ENCODE measurements at regions of chr20 and their contacts with region 1.

Region 1: GRCh38 chr20:41095110-41095969 is 42.0 kb upstream of the PLCG1 start:
- DNase-seq: peak; percentile 74
- ATAC-seq: peak; percentile 76
- H3K4me3 Mint-ChIP-seq: no peak overlapping the region
- H3K27ac Mint-ChIP-seq: no peak overlapping the region
- H3K4me1 Mint-ChIP-seq: peaks cover 12% of the 10 kb centered on the region
- H3K27me3 Mint-ChIP-seq: no peaks in the 10 kb centered on the region

Region 2: GRCh38 chr20:40962730-40963504 is 132.4 kb before region 1 on chr20:
- CTCF ChIA-PET with region 1: interaction called, 79 read pairs
- POLR2A ChIA-PET with region 1: no interaction called
- DNase-seq: peak; percentile 86
- ATAC-seq: peak; percentile 91
- H3K4me3 Mint-ChIP-seq: no peak overlapping the region
- H3K27ac Mint-ChIP-seq: no peak overlapping the region
- H3K4me1 Mint-ChIP-seq: peaks cover 21% of the 10 kb centered on the region
- H3K27me3 Mint-ChIP-seq: peaks cover 9% of the 10 kb centered on the region

Region 3: DNA sequence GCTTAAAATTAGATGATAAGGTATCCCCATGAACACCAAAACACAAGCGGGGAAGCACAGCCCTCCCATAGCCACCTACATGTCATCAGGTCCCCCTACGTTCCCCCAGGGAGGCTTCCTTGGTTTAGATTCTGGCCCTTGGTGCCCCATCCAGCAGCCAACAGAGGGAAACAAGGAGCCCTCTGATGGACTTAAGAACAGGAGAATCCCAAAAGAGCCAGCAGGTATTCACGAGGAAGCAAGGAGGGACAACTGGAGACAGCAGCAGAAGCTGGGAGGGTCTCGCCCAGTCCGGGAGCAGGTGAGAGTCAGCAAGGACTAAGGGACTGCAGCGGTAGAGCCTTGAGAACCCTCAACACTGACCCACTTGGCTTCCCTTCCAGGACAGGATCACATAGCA is 125.1 kb before region 1 on chr20:
- CTCF ChIA-PET with region 1: interaction called, 79 read pairs
- POLR2A ChIA-PET with region 1: no interaction called
- DNase-seq: no peak
- ATAC-seq: no peak
- H3K4me3 Mint-ChIP-seq: no peak overlapping the region
- H3K27ac Mint-ChIP-seq: no peak overlapping the region
- H3K4me1 Mint-ChIP-seq: peaks cover 22% of the 10 kb centered on the region
- H3K27me3 Mint-ChIP-seq: peaks cover 39% of the 10 kb centered on the region

Region 4: GRCh38 chr20:41047975-41048305 is 47.4 kb before region 1 on chr20:
- CTCF ChIA-PET with region 1: interaction called, 11 read pairs
- POLR2A ChIA-PET with region 1: no interaction called
- DNase-seq: no peak
- ATAC-seq: peak; percentile 55
- H3K4me3 Mint-ChIP-seq: peak overlapping the region; percentile 77
- H3K27ac Mint-ChIP-seq: peak overlapping the region; percentile 89
- H3K4me1 Mint-ChIP-seq: peaks cover 87% of the 10 kb centered on the region
- H3K27me3 Mint-ChIP-seq: no peaks in the 10 kb centered on the region

Region 5: DNA sequence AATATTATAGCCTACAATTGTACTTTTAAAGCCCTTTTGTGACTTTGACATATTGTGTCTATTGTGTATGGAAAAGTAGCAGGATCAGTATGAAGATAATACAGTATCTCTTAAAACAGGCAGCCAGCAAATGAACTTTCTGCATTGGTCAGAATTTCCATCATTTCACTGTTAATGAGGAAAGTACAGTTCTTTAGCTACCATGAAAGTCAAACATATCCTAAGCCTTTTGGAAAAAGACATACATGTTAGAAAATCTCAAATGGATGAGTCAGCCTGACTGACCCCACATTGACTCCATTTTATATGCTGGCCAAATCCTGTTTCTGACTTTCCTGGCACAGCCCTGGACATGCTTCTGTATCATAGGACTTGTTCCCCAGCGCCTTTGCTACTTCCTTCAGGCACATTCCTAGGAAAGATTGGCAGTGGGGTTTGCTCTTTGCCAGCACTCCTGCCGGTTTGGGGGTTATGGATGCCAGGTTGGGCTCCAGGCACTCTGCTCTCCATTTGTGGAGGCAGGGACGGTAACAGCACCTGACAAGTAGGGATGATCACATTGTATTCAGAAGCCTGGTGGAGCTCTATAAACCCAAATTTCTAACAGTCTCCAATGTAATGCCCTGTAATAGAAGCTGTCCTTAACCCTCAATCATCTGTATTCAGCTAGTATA is 23.0 kb before region 1 on chr20:
- CTCF ChIA-PET with region 1: interaction called, 10 read pairs
- POLR2A ChIA-PET with region 1: no interaction called
- DNase-seq: no peak
- ATAC-seq: no peak
- H3K4me3 Mint-ChIP-seq: no peak overlapping the region
- H3K27ac Mint-ChIP-seq: peak overlapping the region; percentile 53
- H3K4me1 Mint-ChIP-seq: peaks cover 76% of the 10 kb centered on the region
- H3K27me3 Mint-ChIP-seq: no peaks in the 10 kb centered on the region

Region 6: DNA sequence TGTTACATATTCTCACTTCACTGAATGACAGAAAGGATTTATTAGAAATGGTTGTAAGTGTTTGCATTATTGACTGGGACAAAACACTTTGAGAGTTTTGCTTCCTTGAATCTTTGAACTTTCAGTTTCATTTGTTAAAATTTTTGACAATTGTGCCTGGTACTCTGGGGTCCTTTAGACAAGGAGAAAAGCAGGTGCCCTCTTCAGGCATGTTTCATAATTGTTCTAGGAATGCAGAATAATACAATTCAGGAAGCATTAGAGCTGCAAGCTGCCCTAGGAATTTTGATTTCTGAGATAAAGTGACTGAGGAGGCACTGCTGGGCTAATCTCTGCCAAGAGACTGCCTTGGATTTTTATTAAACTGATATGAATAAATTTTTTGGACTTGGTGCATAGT is 17.0 kb before region 1 on chr20:
- CTCF ChIA-PET with region 1: interaction called, 15 read pairs
- POLR2A ChIA-PET with region 1: no interaction called
- DNase-seq: peak; percentile 26
- ATAC-seq: peak; percentile 36
- H3K4me3 Mint-ChIP-seq: peak overlapping the region; percentile 36
- H3K27ac Mint-ChIP-seq: peak overlapping the region; percentile 27
- H3K4me1 Mint-ChIP-seq: peaks cover 77% of the 10 kb centered on the region
- H3K27me3 Mint-ChIP-seq: no peaks in the 10 kb centered on the region

Region 7: DNA sequence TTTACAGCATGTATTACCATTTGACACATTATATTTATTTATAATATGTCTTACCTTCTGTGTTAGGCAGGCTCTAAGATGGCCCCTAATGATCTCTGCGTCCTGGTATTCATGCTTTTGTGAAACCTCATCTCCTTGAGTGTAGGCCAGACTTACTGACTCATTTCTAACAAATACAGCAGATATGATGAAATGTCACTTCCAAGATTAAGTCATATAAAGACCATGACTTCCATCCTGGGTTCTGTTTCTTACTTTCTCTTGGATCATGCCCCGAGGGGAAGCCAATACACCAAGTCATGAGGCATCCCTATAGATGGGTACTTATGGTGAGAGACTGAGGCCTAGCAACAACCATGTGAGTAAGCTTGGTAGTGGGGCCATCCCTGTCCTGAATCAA is 192.0 kb after region 1 on chr20:
- CTCF ChIA-PET with region 1: no interaction called
- POLR2A ChIA-PET with region 1: no interaction called
- DNase-seq: no peak
- ATAC-seq: no peak
- H3K4me3 Mint-ChIP-seq: no peak overlapping the region
- H3K27ac Mint-ChIP-seq: no peak overlapping the region
- H3K4me1 Mint-ChIP-seq: no peaks in the 10 kb centered on the region
- H3K27me3 Mint-ChIP-seq: no peaks in the 10 kb centered on the region